CD4-positive, alpha-beta memory T cell (primary cell): ENCODE measurements at regions of chr4 and their contacts with region 1.

Region 1: DNA sequence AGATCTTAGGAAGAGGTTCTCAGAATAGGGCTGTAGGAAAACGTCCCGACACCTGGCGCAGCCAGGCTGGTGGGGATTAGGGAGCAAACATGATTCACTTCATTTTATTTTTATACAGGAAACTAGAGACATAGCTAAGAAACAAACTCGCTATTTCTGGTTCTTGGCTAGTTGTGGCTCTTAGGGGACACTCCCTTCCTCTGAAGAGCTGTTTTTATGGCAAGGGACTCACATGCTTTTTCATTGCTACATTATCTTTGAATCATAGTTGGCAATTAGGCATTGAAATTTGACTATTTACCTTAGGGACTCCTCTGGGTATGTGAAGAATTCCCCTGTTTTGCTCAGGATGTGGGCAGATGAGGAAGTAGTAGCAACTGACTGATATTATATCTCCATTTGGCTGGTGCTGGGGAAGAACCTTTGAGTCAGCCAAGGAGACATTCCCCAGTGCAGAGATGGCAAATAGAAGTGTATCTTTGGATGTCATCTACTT is 174.5 kb downstream of the SMIM20 start:
- DNase-seq: peak in 4 of 5 donors; percentile 3 to 73 (median 26)
- H3K4me3 ChIP-seq: no peak overlapping the region
- H3K4me3 Mint-ChIP-seq: peak overlapping the region in 6 of 8 donors; percentile 30 to 72 (median 43)
- H3K27ac ChIP-seq: peak overlapping the region; percentile 21
- H3K27ac Mint-ChIP-seq: peak overlapping the region; percentile 65 to 91 (median 79)
- H3K4me1 ChIP-seq: peaks cover 17% of the 10 kb centered on the region
- H3K4me1 Mint-ChIP-seq: peaks cover 19 to 28% (median 23%) of the 10 kb centered on the region in 4 donors
- H3K27me3 ChIP-seq: no peaks in the 10 kb centered on the region
- H3K27me3 Mint-ChIP-seq: no peaks in the 10 kb centered on the region

Region 2: GRCh38 chr4:24363751-24364150 is 1724.7 kb before region 1 on chr4:
- CTCF ChIA-PET with region 1: no interaction called
- POLR2A ChIA-PET with region 1: no interaction called
- intact Hi-C with region 1: no loop called
- DNase-seq: no peak
- H3K4me3 ChIP-seq: no peak overlapping the region
- H3K4me3 Mint-ChIP-seq: no peak overlapping the region
- H3K27ac ChIP-seq: no peak overlapping the region
- H3K27ac Mint-ChIP-seq: no peak overlapping the region
- H3K4me1 ChIP-seq: no peaks in the 10 kb centered on the region
- H3K4me1 Mint-ChIP-seq: no peaks in the 10 kb centered on the region
- H3K27me3 ChIP-seq: no peaks in the 10 kb centered on the region
- H3K27me3 Mint-ChIP-seq: peaks cover 0 to 2% of the 10 kb centered on the region in 2 donors

Region 3: DNA sequence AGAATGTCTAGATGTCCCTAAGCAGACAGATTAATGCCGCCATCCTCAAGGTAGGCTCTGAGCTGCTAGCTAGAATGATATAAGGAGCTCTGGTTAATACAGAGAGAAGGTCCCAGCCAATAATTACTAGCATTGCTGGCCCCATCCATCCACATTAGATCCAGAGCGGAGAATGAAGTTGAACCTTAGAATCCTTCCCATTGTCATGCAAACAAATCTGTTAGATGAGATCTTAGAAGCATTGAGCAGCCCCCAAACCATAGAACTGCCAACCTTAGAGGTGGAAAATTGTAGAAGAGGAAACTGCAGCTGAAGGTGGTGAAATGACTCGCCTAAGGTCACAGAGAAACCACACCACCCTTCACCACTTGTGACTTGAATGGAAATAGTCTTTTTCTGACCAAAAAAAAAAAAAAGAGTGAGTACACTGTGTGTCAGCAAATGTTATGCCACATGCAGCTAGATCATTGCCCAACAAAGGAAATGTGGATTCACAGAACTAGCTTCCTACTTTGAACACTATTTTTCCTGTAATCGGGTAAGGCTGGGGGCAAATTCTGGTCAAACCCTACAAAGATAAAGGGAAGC is 12.4 kb before region 1 on chr4:
- CTCF ChIA-PET with region 1: interaction called, 3 read pairs
- POLR2A ChIA-PET with region 1: interaction called, 3 read pairs
- intact Hi-C with region 1: loop called (anchors 2 kb)
- DNase-seq: peak in 1 of 5 donors; percentile 9
- H3K4me3 ChIP-seq: no peak overlapping the region
- H3K4me3 Mint-ChIP-seq: no peak overlapping the region
- H3K27ac ChIP-seq: no peak overlapping the region
- H3K27ac Mint-ChIP-seq: peak overlapping the region; percentile 9 to 80 (median 32)
- H3K4me1 ChIP-seq: peaks cover 31% of the 10 kb centered on the region
- H3K4me1 Mint-ChIP-seq: peaks cover 26 to 46% (median 34%) of the 10 kb centered on the region in 4 donors
- H3K27me3 ChIP-seq: no peaks in the 10 kb centered on the region
- H3K27me3 Mint-ChIP-seq: no peaks in the 10 kb centered on the region

Region 4: GRCh38 chr4:26130173-26130572 is 41.7 kb after region 1 on chr4:
- CTCF ChIA-PET with region 1: interaction called, 6 read pairs
- POLR2A ChIA-PET with region 1: interaction called, 3 read pairs
- intact Hi-C with region 1: loop called (anchors 5 kb)
- DNase-seq: no peak
- H3K4me3 ChIP-seq: no peak overlapping the region
- H3K4me3 Mint-ChIP-seq: peak overlapping the region in 6 of 8 donors; percentile 1 to 61 (median 43)
- H3K27ac ChIP-seq: peak overlapping the region; percentile 57
- H3K27ac Mint-ChIP-seq: peak overlapping the region; percentile 31 to 97 (median 92)
- H3K4me1 ChIP-seq: peaks cover 41% of the 10 kb centered on the region
- H3K4me1 Mint-ChIP-seq: peaks cover 25 to 62% (median 48%) of the 10 kb centered on the region in 4 donors
- H3K27me3 ChIP-seq: no peaks in the 10 kb centered on the region
- H3K27me3 Mint-ChIP-seq: peaks cover 0 to 3% of the 10 kb centered on the region in 2 donors